CD14-positive monocyte (primary cell): ENCODE measurements at regions of chr11 and their contacts with region 1.

Region 1: DNA sequence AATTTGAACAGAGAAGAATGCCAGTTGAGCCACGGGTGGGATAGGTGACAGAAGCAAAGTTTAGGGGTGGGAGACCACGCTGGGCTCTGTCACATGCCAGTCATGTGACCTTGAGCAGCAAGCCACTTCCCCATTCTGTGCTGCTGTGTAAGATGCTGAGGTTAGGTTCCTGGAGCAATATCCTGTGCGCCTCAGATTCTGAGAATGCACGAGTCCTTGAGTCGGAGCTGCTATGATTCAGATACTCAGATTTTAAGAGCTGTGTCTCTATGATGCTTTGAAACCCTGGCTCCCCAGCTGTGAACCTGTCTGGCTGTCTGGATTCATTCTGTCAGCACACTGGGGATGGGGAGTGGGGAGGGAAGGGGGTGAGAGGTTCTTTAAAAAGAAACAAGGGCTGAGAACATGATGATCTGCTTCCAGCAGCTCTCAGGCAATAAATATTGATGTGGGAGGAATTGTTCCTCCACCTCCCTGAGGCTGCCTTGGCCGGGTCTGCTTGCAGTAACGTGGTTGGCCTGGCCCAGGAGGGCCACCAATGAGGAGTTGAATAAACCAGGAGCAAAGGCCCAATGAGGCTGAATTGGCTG is 24.0 kb downstream of the SLCO2B1 start:
- DNase-seq: peak; percentile 89 to 94 (median 90)
- H3K4me3 ChIP-seq: peak overlapping the region in 1 of 3 experiments; percentile 22
- H3K4me3 Mint-ChIP-seq: peak overlapping the region; percentile 4 to 49
- H3K27ac ChIP-seq: peak overlapping the region; percentile 78 to 85
- H3K27ac Mint-ChIP-seq: peak overlapping the region; percentile 81 to 95 (median 90)
- H3K4me1 ChIP-seq: peaks cover 27% of the 10 kb centered on the region in 2 donors
- H3K4me1 Mint-ChIP-seq: peaks cover 28% of the 10 kb centered on the region
- H3K27me3 ChIP-seq: no peaks in the 10 kb centered on the region
- H3K27me3 Mint-ChIP-seq: peaks cover 0 to 3% (median 0%) of the 10 kb centered on the region in 3 donors
- CTCF ChIP-seq: no peak

Region 2: DNA sequence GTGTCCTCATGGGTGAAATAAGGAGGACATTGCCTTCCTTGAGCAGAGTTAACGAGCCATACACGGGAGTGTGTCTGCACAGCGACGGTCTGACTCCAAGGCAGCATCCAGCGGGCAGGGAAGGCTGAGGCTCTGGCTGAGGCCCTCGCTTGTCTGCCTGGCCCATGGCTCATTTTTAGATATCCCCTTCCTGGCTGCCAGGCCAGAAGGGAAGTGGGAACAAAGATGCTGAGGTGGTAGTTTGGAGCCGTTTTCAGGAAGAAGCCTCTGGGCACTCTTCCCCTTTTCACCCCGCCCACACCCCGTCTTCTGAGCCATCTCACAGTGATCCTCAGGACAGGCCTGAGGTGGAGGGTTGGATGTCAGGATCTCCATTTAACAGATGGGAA is 27.0 kb before region 1 on chr11:
- intact Hi-C with region 1: loop called in 1 of 2 experiments (anchors 2 kb)
- DNase-seq: peak; percentile 73 to 84 (median 79)
- H3K4me3 ChIP-seq: peak overlapping the region in 1 of 3 experiments; percentile 21
- H3K4me3 Mint-ChIP-seq: peak overlapping the region in 1 of 2 donors; percentile 53
- H3K27ac ChIP-seq: peak overlapping the region; percentile 29 to 66
- H3K27ac Mint-ChIP-seq: peak overlapping the region in 5 of 7 donors; percentile 52 to 77 (median 73)
- H3K4me1 ChIP-seq: peaks cover 42 to 59% of the 10 kb centered on the region in 2 donors
- H3K4me1 Mint-ChIP-seq: peaks cover 46% of the 10 kb centered on the region
- H3K27me3 ChIP-seq: no peaks in the 10 kb centered on the region
- H3K27me3 Mint-ChIP-seq: peaks cover 3 to 20% (median 12%) of the 10 kb centered on the region in 3 donors
- CTCF ChIP-seq: no peak